GM12878 (cell line): ENCODE measurements at regions of chr19 and their contacts with region 1.

Region 1: GRCh38 chr19:1863726-1864480 is 524 bp upstream of the KLF16 start:
- DNase-seq: peak; percentile 45
- ATAC-seq: peak; percentile 78
- H3K4me3 ChIP-seq: peak overlapping the region; percentile 93
- H3K27ac ChIP-seq: peak overlapping the region; percentile 95
- H3K4me1 ChIP-seq: peaks cover 8% of the 10 kb centered on the region
- H3K27me3 ChIP-seq: no peaks in the 10 kb centered on the region
- CTCF ChIP-seq: no peak
- EP300 ChIP-seq: no peak
- POLR2A ChIP-seq: peak; percentile 60
- RAD21 ChIP-seq: no peak

Region 2: DNA sequence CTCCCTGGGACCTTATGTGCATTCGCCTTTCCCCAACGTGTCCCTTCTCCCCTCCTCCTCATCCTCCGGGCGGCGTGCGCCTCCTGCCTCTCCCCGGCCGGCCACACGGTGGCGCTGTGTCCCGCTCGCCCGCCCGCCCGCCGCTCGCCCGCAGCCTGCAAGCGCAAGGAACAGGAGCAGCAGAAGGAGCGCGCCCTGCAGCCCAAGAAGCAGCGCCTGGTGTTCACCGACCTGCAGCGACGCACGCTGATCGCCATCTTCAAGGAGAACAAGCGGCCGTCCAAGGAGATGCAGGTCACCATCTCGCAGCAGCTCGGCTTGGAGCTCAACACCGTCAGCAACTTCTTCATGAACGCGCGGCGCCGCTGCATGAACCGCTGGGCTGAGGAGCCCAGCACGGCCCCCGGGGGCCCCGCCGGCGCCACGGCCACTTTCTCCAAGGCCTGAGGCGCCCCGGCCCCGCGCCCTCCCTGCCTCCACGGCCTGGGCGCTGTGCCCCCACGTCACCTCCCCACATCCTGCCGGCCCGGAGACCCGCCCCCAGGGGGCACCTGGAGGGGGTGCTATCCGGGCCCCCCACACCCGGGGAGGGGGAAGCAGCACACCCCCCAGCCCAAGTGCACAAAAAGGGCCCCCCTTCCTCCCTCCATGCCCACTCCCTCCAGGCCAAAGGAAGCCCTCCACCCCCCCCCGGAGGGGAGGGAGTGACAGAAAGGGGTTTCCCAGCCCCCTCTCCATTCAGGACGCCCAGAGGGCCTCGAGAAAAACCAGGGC is 88.7 kb before region 1 on chr19:
- CTCF ChIA-PET with region 1: no interaction called
- POLR2A ChIA-PET with region 1: no interaction called
- RAD21 ChIA-PET with region 1: no interaction called
- SMC1A ChIA-PET with region 1: no interaction called
- in situ Hi-C with region 1: no loop called
- intact Hi-C with region 1: no loop called
- DNase-seq: no peak
- ATAC-seq: peak; percentile 82
- H3K4me3 ChIP-seq: no peak overlapping the region
- H3K27ac ChIP-seq: no peak overlapping the region
- H3K4me1 ChIP-seq: no peaks in the 10 kb centered on the region
- H3K27me3 ChIP-seq: peaks cover 6 to 10% of the 10 kb centered on the region in 2 experiments
- CTCF ChIP-seq: peak; percentile 29 to 45 (median 36); a peak in 5 of 6 replicates
- EP300 ChIP-seq: no peak
- POLR2A ChIP-seq: no peak
- RAD21 ChIP-seq: 0 out of 2 replicates have a peak, but pooled peaks have one; percentile 2

Region 3: GRCh38 chr19:1799695-1800342 is 64.1 kb before region 1 on chr19:
- CTCF ChIA-PET with region 1: no interaction called
- POLR2A ChIA-PET with region 1: no interaction called
- RAD21 ChIA-PET with region 1: no interaction called
- SMC1A ChIA-PET with region 1: no interaction called
- in situ Hi-C with region 1: no loop called
- intact Hi-C with region 1: no loop called
- DNase-seq: no peak
- ATAC-seq: no peak
- H3K4me3 ChIP-seq: no peak overlapping the region
- H3K27ac ChIP-seq: no peak overlapping the region
- H3K4me1 ChIP-seq: no peaks in the 10 kb centered on the region
- H3K27me3 ChIP-seq: no peaks in the 10 kb centered on the region
- CTCF ChIP-seq: no peak
- EP300 ChIP-seq: no peak
- POLR2A ChIP-seq: no peak
- RAD21 ChIP-seq: no peak

Region 4: GRCh38 chr19:1875646-1876495 is 12.0 kb after region 1 on chr19:
- CTCF ChIA-PET with region 1: interaction called, 19 read pairs
- POLR2A ChIA-PET with region 1: interaction called, 15 read pairs
- RAD21 ChIA-PET with region 1: interaction called, 6 read pairs
- SMC1A ChIA-PET with region 1: interaction called, 6 read pairs
- in situ Hi-C with region 1: no loop called
- intact Hi-C with region 1: no loop called
- DNase-seq: peak; percentile 51
- ATAC-seq: peak; percentile 98
- H3K4me3 ChIP-seq: peak overlapping the region; percentile 89
- H3K27ac ChIP-seq: peak overlapping the region; percentile 93
- H3K4me1 ChIP-seq: peaks cover 3% of the 10 kb centered on the region; the same call in 1 of the 2 replicates
- H3K27me3 ChIP-seq: no peaks in the 10 kb centered on the region
- CTCF ChIP-seq: no peak
- EP300 ChIP-seq: peak in 1 of 2 experiments; percentile 44; a peak in 1 of 4 replicates
- POLR2A ChIP-seq: peak; percentile 96
- RAD21 ChIP-seq: no peak

Region 5: GRCh38 chr19:1884719-1885334 is 20.9 kb after region 1 on chr19:
- CTCF ChIA-PET with region 1: interaction called, 5 read pairs
- POLR2A ChIA-PET with region 1: interaction called, 11 read pairs
- RAD21 ChIA-PET with region 1: interaction called, 7 read pairs
- SMC1A ChIA-PET with region 1: interaction called, 3 read pairs
- in situ Hi-C with region 1: no loop called
- intact Hi-C with region 1: no loop called
- DNase-seq: no peak
- ATAC-seq: peak; percentile 8
- H3K4me3 ChIP-seq: peak overlapping the region; percentile 99
- H3K27ac ChIP-seq: peak overlapping the region; percentile 82
- H3K4me1 ChIP-seq: peaks cover 21% of the 10 kb centered on the region
- H3K27me3 ChIP-seq: no peaks in the 10 kb centered on the region
- CTCF ChIP-seq: no peak
- EP300 ChIP-seq: no peak
- POLR2A ChIP-seq: peak; percentile 67
- RAD21 ChIP-seq: no peak

Region 6: DNA sequence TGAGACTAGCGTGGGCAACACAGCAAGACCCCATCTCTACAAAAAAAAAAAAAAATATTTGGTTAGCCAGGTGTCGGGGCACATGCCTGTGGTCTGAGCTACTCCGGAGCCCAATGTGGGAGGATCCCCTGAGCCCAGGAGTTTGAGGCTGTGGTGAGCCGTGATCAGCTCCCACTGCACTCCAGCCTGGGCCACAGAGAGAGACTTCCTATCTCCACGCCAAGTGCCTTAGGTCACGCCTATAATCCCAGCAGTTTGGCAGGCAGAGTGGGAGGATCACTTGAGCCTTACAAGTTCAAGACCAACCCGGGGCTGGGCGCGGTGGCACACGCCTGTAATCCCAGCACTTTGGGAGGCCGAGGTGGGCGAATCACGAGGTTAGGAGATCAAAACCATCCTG is 32.6 kb after region 1 on chr19:
- CTCF ChIA-PET with region 1: interaction called, 8 read pairs
- POLR2A ChIA-PET with region 1: interaction called, 5 read pairs
- RAD21 ChIA-PET with region 1: interaction called, 16 read pairs
- SMC1A ChIA-PET with region 1: interaction called, 9 read pairs
- in situ Hi-C with region 1: no loop called
- intact Hi-C with region 1: no loop called
- DNase-seq: no peak
- ATAC-seq: no peak
- H3K4me3 ChIP-seq: peak overlapping the region; percentile 52; the same call in 1 of the 2 replicates
- H3K27ac ChIP-seq: 0 out of 2 replicates have a peak overlapping the region, but pooled peaks have one; percentile 66
- H3K4me1 ChIP-seq: peaks cover 23% of the 10 kb centered on the region
- H3K27me3 ChIP-seq: no peaks in the 10 kb centered on the region
- CTCF ChIP-seq: no peak
- EP300 ChIP-seq: no peak
- POLR2A ChIP-seq: no peak
- RAD21 ChIP-seq: no peak

Region 7: GRCh38 chr19:1905071-1905862 is 41.4 kb after region 1 on chr19 and contains the starts of genes ADAT3 and SCAMP4:
- CTCF ChIA-PET with region 1: interaction called, 5 read pairs
- POLR2A ChIA-PET with region 1: interaction called, 9 read pairs
- RAD21 ChIA-PET with region 1: interaction called, 9 read pairs
- SMC1A ChIA-PET with region 1: interaction called, 4 read pairs
- in situ Hi-C with region 1: no loop called
- intact Hi-C with region 1: loop called (anchors 1 kb)
- DNase-seq: peak; percentile 94
- ATAC-seq: peak; percentile 96
- H3K4me3 ChIP-seq: peak within 1 kb of the TSS; percentile 81
- H3K27ac ChIP-seq: peak within 1 kb of the TSS; percentile 96
- H3K4me1 ChIP-seq: peaks cover 37% of the 10 kb centered on the region
- H3K27me3 ChIP-seq: no peaks in the 10 kb centered on the region
- CTCF ChIP-seq: no peak
- EP300 ChIP-seq: no peak
- POLR2A ChIP-seq: peak; percentile 80
- RAD21 ChIP-seq: no peak
- polyA plus RNA-seq, gene ADAT3: not detected
- polyA plus RNA-seq, gene SCAMP4: 0.63 to 2.3 TPM

Region 8: GRCh38 chr19:1929021-1929742 is 65.3 kb after region 1 on chr19:
- CTCF ChIA-PET with region 1: interaction called, 6 read pairs
- POLR2A ChIA-PET with region 1: interaction called, 9 read pairs
- RAD21 ChIA-PET with region 1: interaction called, 6 read pairs
- SMC1A ChIA-PET with region 1: interaction called, 5 read pairs
- in situ Hi-C with region 1: no loop called
- intact Hi-C with region 1: loop called (anchors 2 kb)
- DNase-seq: no peak
- ATAC-seq: peak; percentile 98
- H3K4me3 ChIP-seq: peak overlapping the region; percentile 45; the same call in 1 of the 2 replicates
- H3K27ac ChIP-seq: no peak overlapping the region
- H3K4me1 ChIP-seq: peaks cover 9% of the 10 kb centered on the region
- H3K27me3 ChIP-seq: no peaks in the 10 kb centered on the region
- CTCF ChIP-seq: peak; percentile 83 to 97 (median 85)
- EP300 ChIP-seq: no peak
- POLR2A ChIP-seq: no peak
- RAD21 ChIP-seq: peak; percentile 89

Region 9: GRCh38 chr19:3365836-3366752 is 1502.2 kb after region 1 on chr19 and contains the start of gene NFIC:
- CTCF ChIA-PET with region 1: no interaction called
- POLR2A ChIA-PET with region 1: no interaction called
- RAD21 ChIA-PET with region 1: no interaction called
- SMC1A ChIA-PET with region 1: no interaction called
- in situ Hi-C with region 1: loop called (anchors 25 kb)
- intact Hi-C with region 1: no loop called
- DNase-seq: no peak
- ATAC-seq: peak; percentile 30
- H3K4me3 ChIP-seq: peak within 1 kb of the TSS; percentile 96
- H3K27ac ChIP-seq: peak within 1 kb of the TSS; percentile 92
- H3K4me1 ChIP-seq: peaks cover 36% of the 10 kb centered on the region
- H3K27me3 ChIP-seq: no peaks in the 10 kb centered on the region
- CTCF ChIP-seq: no peak
- EP300 ChIP-seq: no peak
- POLR2A ChIP-seq: peak; percentile 3; the same call in 1 of the 2 replicates
- RAD21 ChIP-seq: no peak
- polyA plus RNA-seq, gene NFIC: 0.71 to 1.1 TPM